Dorsolateral prefrontal cortex (tissue), 120 donors: ENCODE measurements at regions of chr3 and their contacts with region 1.

Region 1: DNA sequence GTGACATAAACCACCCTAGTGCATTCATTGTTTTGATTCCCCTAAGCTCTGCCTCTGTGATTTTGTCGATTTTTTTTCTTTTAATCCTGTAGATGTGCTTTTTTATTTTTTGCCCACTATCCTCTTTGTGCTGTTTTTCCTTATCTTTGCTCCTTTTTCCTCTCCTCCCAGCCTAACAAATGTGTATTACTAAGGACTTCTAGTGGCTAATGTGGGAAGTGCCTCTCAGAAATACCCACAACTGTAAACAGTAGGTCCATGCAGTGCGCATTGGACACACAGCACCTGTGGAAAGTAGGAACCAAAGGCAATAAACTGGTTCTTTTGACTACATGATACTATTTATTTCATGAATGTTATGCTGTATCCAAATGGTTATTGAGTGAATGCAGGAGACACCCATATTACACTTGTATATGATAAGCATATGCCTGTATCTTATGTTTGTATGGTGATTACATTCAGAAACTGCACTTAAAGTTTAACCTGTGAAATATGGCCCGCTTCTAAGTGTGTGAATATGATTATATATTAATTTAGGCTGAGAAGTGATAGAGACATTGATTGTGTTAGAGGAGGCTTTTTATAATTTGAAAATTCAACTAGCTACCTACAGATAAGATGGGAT is 147.8 kb downstream of the PLCL2 start:
- DNase-seq: peak in 1 of 10 donors; percentile 30
- H3K4me3 ChIP-seq: no peak overlapping the region
- H3K27ac ChIP-seq: no peak overlapping the region
- H3K27me3 ChIP-seq: no peaks in the 10 kb centered on the region
- CTCF ChIP-seq: peak; percentile 49 to 78 (median 68)

Region 2: GRCh38 chr3:16600780-16601539 is 431.6 kb before region 1 on chr3:
- intact Hi-C with region 1: loop called (anchors 5 to 10 kb)
- DNase-seq: peak; percentile 56 to 90 (median 78)
- H3K4me3 ChIP-seq: peak overlapping the region in 37 of 59 donors; percentile 1 to 50 (median 27)
- H3K27ac ChIP-seq: no peak overlapping the region
- H3K27me3 ChIP-seq: no peaks in the 10 kb centered on the region
- CTCF ChIP-seq: peak; percentile 85 to 99 (median 94)

Region 3: GRCh38 chr3:16884084-16884747 is 148.3 kb before region 1 on chr3:
- intact Hi-C with region 1: loop called (anchors 5 to 10 kb)
- DNase-seq: peak in 5 of 10 donors; percentile 47 to 60 (median 53)
- H3K4me3 ChIP-seq: peak overlapping the region; percentile 42 to 93 (median 84)
- H3K27ac ChIP-seq: peak overlapping the region; percentile 18 to 99 (median 95)
- H3K27me3 ChIP-seq: no peaks in the 10 kb centered on the region
- CTCF ChIP-seq: peak in 53 of 56 donors; percentile 31 to 66 (median 53)

Region 4: DNA sequence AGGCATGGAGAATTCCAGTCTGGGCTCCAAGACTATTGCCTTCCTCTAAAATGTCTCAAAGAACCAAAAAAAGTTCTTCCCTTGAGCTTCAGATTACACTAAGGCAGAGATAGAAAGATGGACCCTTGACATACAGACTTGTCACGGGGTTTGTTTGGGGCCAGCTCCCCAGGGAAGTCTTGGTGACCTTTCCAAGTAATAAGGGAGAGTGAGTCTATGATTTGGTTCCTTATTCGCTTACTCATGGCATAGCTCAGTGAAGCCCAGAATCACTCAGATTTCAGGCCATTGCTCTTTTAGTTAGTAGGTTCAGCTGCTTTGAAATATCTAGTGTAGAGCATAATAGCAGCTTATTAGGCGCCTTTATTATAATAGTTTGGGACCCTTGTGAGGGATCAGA is 57.4 kb before region 1 on chr3:
- intact Hi-C with region 1: no loop called
- DNase-seq: no peak
- H3K4me3 ChIP-seq: no peak overlapping the region
- H3K27ac ChIP-seq: no peak overlapping the region
- H3K27me3 ChIP-seq: no peaks in the 10 kb centered on the region
- CTCF ChIP-seq: no peak

Region 5: GRCh38 chr3:17195856-17196604 is 163.5 kb after region 1 on chr3:
- intact Hi-C with region 1: loop called in 1 of 2 experiments (anchors 10 kb)
- DNase-seq: no peak
- H3K4me3 ChIP-seq: peak overlapping the region in 10 of 59 donors; percentile 1 to 19 (median 6)
- H3K27ac ChIP-seq: peak overlapping the region in 58 of 59 donors; percentile 24 to 95 (median 86)
- H3K27me3 ChIP-seq: no peaks in the 10 kb centered on the region
- CTCF ChIP-seq: peak in 52 of 56 donors; percentile 13 to 69 (median 44)